Gastrocnemius medialis (tissue), 4 donors: ENCODE measurements at regions of chr13 and their contacts with region 1.

Region 1: GRCh38 chr13:24491845-24492244 is 20.7 kb downstream of the PARP4 start:
- DNase-seq: no peak
- ATAC-seq: no peak
- H3K4me3 ChIP-seq: no peak overlapping the region
- H3K27ac ChIP-seq: no peak overlapping the region
- H3K4me1 ChIP-seq: no peaks in the 10 kb centered on the region
- H3K27me3 ChIP-seq: no peaks in the 10 kb centered on the region
- CTCF ChIP-seq: no peak
- POLR2A ChIP-seq: no peak

Region 2: GRCh38 chr13:24520733-24521132 is 28.9 kb after region 1 on chr13:
- in situ Hi-C with region 1: no loop called
- intact Hi-C with region 1: no loop called
- DNase-seq: no peak
- ATAC-seq: no peak
- H3K4me3 ChIP-seq: no peak overlapping the region
- H3K27ac ChIP-seq: no peak overlapping the region
- H3K4me1 ChIP-seq: no peaks in the 10 kb centered on the region
- H3K27me3 ChIP-seq: no peaks in the 10 kb centered on the region
- CTCF ChIP-seq: no peak
- POLR2A ChIP-seq: no peak

Region 3: GRCh38 chr13:25796466-25796865 is 1304.6 kb after region 1 on chr13:
- in situ Hi-C with region 1: no loop called
- intact Hi-C with region 1: loop called (anchors 10 kb)
- DNase-seq: no peak
- ATAC-seq: no peak
- H3K4me3 ChIP-seq: no peak overlapping the region
- H3K27ac ChIP-seq: no peak overlapping the region
- H3K4me1 ChIP-seq: no peaks in the 10 kb centered on the region
- H3K27me3 ChIP-seq: no peaks in the 10 kb centered on the region
- CTCF ChIP-seq: no peak
- POLR2A ChIP-seq: no peak